HEK293T (cell line): ENCODE measurements at regions of chr21 and their contacts with region 1.

Region 1: DNA sequence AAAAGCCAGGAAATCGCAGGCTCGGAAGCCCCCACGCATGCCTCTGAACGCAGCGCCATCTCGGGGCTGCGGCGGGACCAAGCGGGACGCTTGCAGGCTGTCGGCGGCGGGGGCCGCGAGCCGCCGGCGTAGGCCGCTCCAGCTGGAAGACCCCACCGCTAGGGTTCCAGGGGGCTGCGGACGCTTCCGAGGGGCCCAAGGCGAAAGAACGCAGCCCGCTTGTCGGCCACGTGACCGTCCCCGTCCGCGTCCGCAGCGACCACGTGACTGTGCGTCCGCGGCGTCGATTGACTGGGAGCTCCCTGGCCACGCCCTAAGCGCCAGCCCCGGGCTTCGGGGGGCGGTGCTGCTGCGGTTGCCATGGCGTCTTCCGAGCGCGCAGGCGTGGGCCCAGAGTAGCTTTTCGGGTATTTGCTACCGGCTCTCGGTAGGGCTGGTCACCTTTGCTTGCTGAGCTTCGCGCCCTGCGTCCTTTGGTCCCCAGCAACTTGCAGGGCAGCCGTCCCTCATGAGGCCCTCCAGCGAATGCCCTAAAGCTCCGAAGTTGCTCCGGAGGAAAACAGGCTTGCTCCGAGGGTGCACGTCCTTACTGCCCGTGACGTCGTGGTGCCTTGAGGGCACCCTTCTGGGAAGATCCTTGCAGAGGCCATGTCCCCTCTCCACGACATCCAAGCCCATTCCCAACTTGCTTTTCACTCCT is 197.2 kb downstream of the DYRK1A start:
- DNase-seq: peak; percentile 96

Region 2: DNA sequence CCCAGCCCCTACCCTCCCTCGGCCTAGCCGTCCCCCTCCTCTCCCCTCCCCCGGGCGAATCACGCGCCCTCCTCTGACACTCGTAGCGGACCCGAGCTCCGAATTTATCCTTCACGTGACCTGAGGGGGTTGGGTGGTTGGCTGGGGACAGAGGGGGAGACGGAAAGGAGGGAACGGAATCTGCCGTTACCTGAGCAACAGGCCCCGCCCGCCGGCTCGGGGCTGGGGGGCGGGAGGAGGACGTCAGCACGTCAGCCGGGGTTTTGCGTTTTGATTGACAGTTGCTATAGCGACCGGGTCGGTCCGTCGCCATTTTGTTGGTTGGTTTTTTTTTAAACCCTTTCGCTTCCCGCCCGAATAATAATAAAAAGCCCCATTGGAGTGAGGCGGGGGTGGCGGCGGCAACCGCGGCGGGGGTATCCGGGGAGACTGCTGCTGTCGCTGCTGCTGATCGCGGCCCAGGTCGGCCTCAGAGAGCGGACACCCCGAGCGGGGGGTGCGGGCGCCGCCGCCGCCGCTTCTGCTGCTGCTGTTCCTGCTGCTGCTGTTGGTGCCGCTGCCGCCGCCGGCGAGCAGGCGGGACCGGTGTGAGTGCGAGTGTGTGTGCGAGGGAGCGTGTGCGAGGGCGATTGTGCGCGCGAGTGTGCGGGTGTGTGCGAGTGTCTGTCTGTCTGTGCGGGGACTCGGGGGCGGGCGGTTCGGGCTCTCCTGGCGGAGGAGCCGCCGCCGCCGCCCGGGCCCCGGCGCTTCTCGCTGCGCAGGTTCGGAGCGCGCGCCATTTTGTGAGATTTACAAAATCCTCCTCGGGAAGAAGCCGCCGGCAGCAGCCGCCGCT is 197.1 kb before region 1 on chr21 and contains the start of gene DYRK1A:
- CTCF ChIA-PET with region 1: no interaction called
- POLR2A ChIA-PET with region 1: interaction called, 13 read pairs
- DNase-seq: peak; percentile 100

Region 3: GRCh38 chr21:37546949-37547614 is 16.7 kb before region 1 on chr21:
- CTCF ChIA-PET with region 1: no interaction called
- POLR2A ChIA-PET with region 1: interaction called, 30 read pairs
- DNase-seq: peak; percentile 55

Region 4: DNA sequence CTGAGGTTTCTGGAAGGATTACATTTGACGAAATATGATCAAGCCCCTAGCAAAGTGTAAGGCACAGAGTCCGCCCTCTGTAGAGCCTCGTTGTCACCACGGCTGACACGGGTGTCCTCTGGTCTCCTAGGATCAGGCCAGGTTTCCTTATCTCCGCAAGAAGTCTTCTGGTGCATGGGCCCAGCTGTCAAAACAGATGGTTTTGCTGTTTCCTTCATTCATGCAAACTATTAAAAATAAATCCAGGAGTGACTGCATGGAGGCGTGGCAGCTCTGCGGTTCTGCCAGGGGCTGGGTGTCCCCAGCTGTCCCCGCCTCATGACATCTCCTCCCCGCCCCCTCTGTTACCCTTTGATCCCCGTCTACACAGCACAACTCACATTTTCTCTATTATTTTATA is 11.8 kb after region 1 on chr21:
- CTCF ChIA-PET with region 1: no interaction called
- POLR2A ChIA-PET with region 1: interaction called, 12 read pairs
- DNase-seq: no peak

Region 5: GRCh38 chr21:37593015-37593414 is 29.2 kb after region 1 on chr21:
- CTCF ChIA-PET with region 1: no interaction called
- POLR2A ChIA-PET with region 1: no interaction called
- DNase-seq: no peak